AG04450 (cell line): ENCODE measurements at regions of chr2 and their contacts with region 1.

Region 1: GRCh38 chr2:173822889-173823542 is 142.2 kb downstream of the SP3 start:
- DNase-seq: no peak
- H3K4me3 ChIP-seq: no peak overlapping the region
- H3K27ac ChIP-seq: no peak overlapping the region
- H3K27me3 ChIP-seq: peaks cover 43% of the 10 kb centered on the region
- CTCF ChIP-seq: no peak

Region 2: GRCh38 chr2:173386021-173386737 is 436.8 kb before region 1 on chr2:
- CTCF ChIA-PET with region 1: no interaction called
- POLR2A ChIA-PET with region 1: interaction called, 11 read pairs
- DNase-seq: no peak
- H3K4me3 ChIP-seq: no peak overlapping the region
- H3K27ac ChIP-seq: no peak overlapping the region
- H3K27me3 ChIP-seq: peaks cover 4% of the 10 kb centered on the region
- CTCF ChIP-seq: no peak

Region 3: DNA sequence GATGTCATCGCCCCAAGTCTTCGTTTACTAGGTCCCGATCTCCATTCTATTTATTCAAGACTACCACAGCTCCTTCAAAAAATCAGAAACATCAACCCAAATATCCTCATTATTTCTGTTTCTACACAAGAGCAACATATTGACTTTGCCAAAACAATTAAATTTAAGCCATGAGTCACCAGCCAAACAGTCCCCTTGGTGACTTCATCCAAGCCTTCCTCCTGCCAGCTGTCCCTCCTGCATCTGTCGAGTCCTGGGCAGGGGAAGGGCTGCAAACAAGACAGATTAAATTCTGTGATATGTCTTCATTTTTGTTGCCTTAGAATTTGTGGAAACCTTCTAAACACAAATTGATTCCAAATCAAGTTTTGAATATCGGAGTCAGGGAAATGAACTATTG is 31.8 kb after region 1 on chr2:
- CTCF ChIA-PET with region 1: no interaction called
- POLR2A ChIA-PET with region 1: no interaction called
- DNase-seq: no peak
- H3K4me3 ChIP-seq: no peak overlapping the region
- H3K27ac ChIP-seq: no peak overlapping the region
- H3K27me3 ChIP-seq: peaks cover 4% of the 10 kb centered on the region
- CTCF ChIP-seq: no peak

Region 4: DNA sequence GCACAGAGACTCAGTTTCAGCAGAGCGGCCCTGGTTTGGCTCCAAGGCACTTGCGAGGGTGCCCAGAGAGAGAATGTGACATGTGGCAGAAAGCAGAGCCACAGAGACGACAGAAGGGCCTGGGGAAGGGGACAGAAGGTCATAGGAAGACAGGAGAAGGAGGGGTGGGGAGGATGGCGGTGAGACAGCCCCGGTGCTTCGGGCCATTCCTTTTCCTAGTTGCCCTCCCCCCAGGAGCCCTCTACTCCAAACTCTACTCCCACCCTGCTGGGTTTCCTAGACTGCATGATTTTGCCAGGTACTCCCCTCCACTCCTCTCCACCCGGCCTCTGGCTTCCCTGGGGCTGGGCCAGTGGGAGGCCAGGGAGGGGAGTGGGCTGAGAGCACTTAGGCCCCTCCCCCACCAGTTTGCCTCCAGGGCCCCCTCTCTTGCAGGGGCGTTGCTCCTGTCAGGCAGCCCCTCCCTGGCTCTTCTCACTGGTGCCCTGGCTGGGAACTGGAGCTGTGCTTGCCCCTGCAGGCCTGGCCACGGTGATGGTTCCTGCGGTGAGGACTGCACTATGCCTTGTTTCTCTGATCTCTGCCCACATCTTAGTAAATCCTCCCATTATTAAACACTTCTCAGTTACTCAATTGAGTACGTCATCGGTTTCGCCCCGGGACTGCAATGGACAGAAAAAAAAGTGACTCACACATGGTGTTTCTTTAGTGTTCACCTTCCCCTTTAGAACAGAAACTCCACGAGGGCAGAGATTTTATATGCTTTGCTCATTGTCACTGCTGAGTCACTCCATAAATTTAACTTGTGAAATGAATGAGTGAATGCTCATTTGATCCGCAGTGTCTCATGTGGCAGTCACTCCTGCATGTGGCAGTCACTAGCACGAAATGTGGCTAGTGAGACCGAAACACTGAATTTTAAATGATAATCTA is 200.8 kb after region 1 on chr2:
- CTCF ChIA-PET with region 1: no interaction called
- POLR2A ChIA-PET with region 1: no interaction called
- DNase-seq: peak; percentile 81
- H3K4me3 ChIP-seq: no peak overlapping the region
- H3K27ac ChIP-seq: peak overlapping the region; percentile 96
- H3K27me3 ChIP-seq: no peaks in the 10 kb centered on the region
- CTCF ChIP-seq: no peak